ENCODE measurements at regions of chr17 and their contacts with region 1.

Region 1: GRCh38 chr17:50478391-50479381 is at the start of gene RSAD1:
- DNase-seq: peak; percentile 98
- H3K4me3 ChIP-seq: peak within 1 kb of the TSS; percentile 80 to 90
- H3K27ac ChIP-seq: peak within 1 kb of the TSS; percentile 79 to 88
- H3K4me1 ChIP-seq: peaks cover 10 to 17% of the 10 kb centered on the region in 2 experiments; a peak in 2 of 4 replicates
- H3K27me3 ChIP-seq: no peaks in the 10 kb centered on the region
- CTCF ChIP-seq: peak; percentile 94
- EP300 ChIP-seq: peak; percentile 20 to 32; a peak in 2 of 4 replicates
- RAD21 ChIP-seq: peak; percentile 53
- polyA plus RNA-seq, gene RSAD1: 44.7 and 58.9 TPM in 2 replicates

Region 2: GRCh38 chr17:50361561-50362480 is 116.9 kb before region 1 on chr17:
- CTCF ChIA-PET with region 1: interaction called, 16 read pairs
- POLR2A ChIA-PET with region 1: interaction called, 4 read pairs
- DNase-seq: peak; percentile 90
- H3K4me3 ChIP-seq: no peak overlapping the region; a peak in 1 of 4 replicates
- H3K27ac ChIP-seq: peak overlapping the region in 1 of 2 experiments; percentile 59; a peak in 2 of 4 replicates
- H3K4me1 ChIP-seq: peaks cover 9 to 25% of the 10 kb centered on the region in 2 experiments; a peak in 2 of 4 replicates
- H3K27me3 ChIP-seq: no peaks in the 10 kb centered on the region
- CTCF ChIP-seq: peak; percentile 92
- EP300 ChIP-seq: no peak
- RAD21 ChIP-seq: peak; percentile 66

Region 3: GRCh38 chr17:50406578-50406977 is 72.1 kb before region 1 on chr17:
- CTCF ChIA-PET with region 1: interaction called, 12 read pairs
- POLR2A ChIA-PET with region 1: no interaction called
- DNase-seq: no peak
- H3K4me3 ChIP-seq: no peak overlapping the region
- H3K27ac ChIP-seq: no peak overlapping the region
- H3K4me1 ChIP-seq: no peaks in the 10 kb centered on the region
- H3K27me3 ChIP-seq: peaks cover 51% of the 10 kb centered on the region
- CTCF ChIP-seq: no peak
- EP300 ChIP-seq: no peak
- RAD21 ChIP-seq: no peak

Region 4: DNA sequence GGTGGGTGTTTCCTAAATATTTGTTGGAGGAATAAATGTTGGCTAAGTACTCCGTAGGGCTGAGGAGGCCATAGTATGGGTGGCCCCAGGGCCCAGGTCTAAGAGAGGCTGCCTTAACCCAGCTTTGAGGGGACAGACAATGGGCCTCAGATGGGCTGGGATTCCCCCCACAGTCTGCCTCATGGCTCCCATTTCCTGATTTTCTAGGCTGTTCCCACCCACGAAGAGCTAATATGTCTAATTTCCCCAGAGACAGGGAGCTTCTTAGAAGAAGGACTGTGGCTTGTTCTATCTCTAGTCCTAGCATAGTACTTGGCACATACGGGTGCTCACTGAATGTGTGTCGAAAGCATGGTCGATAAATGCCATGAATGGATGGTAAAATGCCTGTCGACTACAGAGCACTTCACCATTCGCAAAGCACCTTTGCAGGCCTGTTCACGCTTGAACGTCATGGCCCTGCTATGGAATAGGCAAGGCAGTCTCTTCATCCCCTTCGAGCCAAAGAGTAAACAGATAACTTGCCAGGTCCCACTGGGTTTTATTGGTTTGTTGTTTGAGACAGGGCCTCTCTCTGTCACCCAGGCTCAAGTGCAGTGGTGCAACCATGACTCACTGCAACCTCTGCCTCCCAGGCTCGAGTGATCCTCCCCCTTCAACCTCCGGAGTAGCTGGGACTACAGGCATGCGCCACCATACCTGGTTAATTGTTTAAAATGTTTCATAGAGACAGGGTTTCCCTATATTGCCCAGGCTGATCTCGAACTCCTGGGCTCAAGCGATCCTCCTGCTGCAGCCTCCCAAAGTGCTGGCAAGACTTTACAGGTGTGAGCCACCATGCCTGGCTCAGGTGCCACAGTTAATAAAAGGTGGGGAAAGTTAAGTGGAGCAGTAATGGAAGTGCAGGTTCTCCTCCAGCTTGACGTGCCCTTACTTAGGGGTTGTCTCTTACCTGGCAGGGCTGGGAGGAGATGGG is 19.7 kb before region 1 on chr17:
- CTCF ChIA-PET with region 1: interaction called, 18 read pairs
- POLR2A ChIA-PET with region 1: no interaction called
- DNase-seq: no peak
- H3K4me3 ChIP-seq: no peak overlapping the region
- H3K27ac ChIP-seq: no peak overlapping the region
- H3K4me1 ChIP-seq: no peaks in the 10 kb centered on the region
- H3K27me3 ChIP-seq: no peaks in the 10 kb centered on the region
- CTCF ChIP-seq: no peak
- EP300 ChIP-seq: no peak
- RAD21 ChIP-seq: no peak

Region 5: GRCh38 chr17:50507871-50508572 is 29.3 kb after region 1 on chr17 and contains the start of gene MYCBPAP:
- CTCF ChIA-PET with region 1: interaction called, 183 read pairs
- POLR2A ChIA-PET with region 1: no interaction called
- DNase-seq: peak; percentile 98
- H3K4me3 ChIP-seq: peak within 1 kb of the TSS; percentile 62 to 65
- H3K27ac ChIP-seq: peak within 1 kb of the TSS; percentile 22 to 48; a peak in 3 of 4 replicates
- H3K4me1 ChIP-seq: peaks cover 0 to 14% of the 10 kb centered on the region in 2 experiments; a peak in 1 of 4 replicates
- H3K27me3 ChIP-seq: no peaks in the 10 kb centered on the region
- CTCF ChIP-seq: no peak; the same call in 1 of the 2 replicates
- EP300 ChIP-seq: no peak
- RAD21 ChIP-seq: no peak
- polyA plus RNA-seq, gene MYCBPAP: 2.4 and 4.4 TPM in 2 replicates

Region 6: GRCh38 chr17:50534222-50534978 is 55.7 kb after region 1 on chr17:
- CTCF ChIA-PET with region 1: interaction called, 27 read pairs
- POLR2A ChIA-PET with region 1: interaction called, 4 read pairs
- DNase-seq: peak; percentile 62
- H3K4me3 ChIP-seq: no peak overlapping the region
- H3K27ac ChIP-seq: no peak overlapping the region
- H3K4me1 ChIP-seq: peaks cover 7 to 30% of the 10 kb centered on the region in 2 experiments; a peak in 3 of 4 replicates
- H3K27me3 ChIP-seq: peaks cover 28% of the 10 kb centered on the region; the same call in 1 of the 2 replicates
- CTCF ChIP-seq: no peak
- EP300 ChIP-seq: no peak
- RAD21 ChIP-seq: no peak

Region 7: GRCh38 chr17:50638851-50639767 is 160.4 kb after region 1 on chr17:
- CTCF ChIA-PET with region 1: interaction called, 11 read pairs
- POLR2A ChIA-PET with region 1: no interaction called
- DNase-seq: peak; percentile 81
- H3K4me3 ChIP-seq: peak overlapping the region; percentile 4 to 43; a peak in 3 of 4 replicates
- H3K27ac ChIP-seq: peak overlapping the region; percentile 88 to 97
- H3K4me1 ChIP-seq: peaks cover 41 to 60% of the 10 kb centered on the region in 2 experiments; a peak in 3 of 4 replicates
- H3K27me3 ChIP-seq: no peaks in the 10 kb centered on the region
- CTCF ChIP-seq: no peak
- EP300 ChIP-seq: peak; percentile 65 to 94
- RAD21 ChIP-seq: peak; percentile 12; the same call in 1 of the 2 replicates

Measured in SK-N-SH (cell line).